ENCODE measurements at regions of chr15 and their contacts with region 1.

Region 1: GRCh38 chr15:69413822-69414700 is at the start of gene KIF23:
- DNase-seq: peak; percentile 97

Region 2: DNA sequence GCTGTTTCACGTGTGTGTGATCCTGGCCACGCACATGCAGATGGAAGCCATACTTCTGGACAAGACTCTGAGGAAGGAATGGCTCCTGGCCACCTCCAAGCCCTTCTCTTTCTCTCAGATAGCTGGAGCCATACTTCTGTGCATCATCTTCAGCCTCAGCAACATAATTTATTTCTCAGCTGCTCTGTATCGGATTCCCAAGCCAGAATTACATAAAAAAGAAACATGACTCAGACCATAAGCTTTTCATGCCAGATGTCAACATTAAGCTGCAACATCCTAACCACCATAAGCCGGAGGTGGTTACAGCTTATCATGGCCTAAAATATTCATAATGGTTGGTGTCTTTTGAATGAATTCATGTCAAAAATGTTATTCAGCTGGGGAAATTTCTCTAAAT is 10.5 kb before region 1 on chr15:
- CTCF ChIA-PET with region 1: no interaction called
- POLR2A ChIA-PET with region 1: interaction called, 15 read pairs
- DNase-seq: no peak

Region 3: GRCh38 chr15:69452692-69453521 is 38.8 kb after region 1 on chr15 and contains the start of gene RPLP1:
- CTCF ChIA-PET with region 1: interaction called, 5 read pairs
- POLR2A ChIA-PET with region 1: interaction called, 28 read pairs
- DNase-seq: peak; percentile 93

Region 4: GRCh38 chr15:69462493-69463181 is 48.6 kb after region 1 on chr15:
- CTCF ChIA-PET with region 1: interaction called, 3 read pairs
- POLR2A ChIA-PET with region 1: interaction called, 20 read pairs
- DNase-seq: peak; percentile 95